HCT116 (cell line): ENCODE measurements at regions of chr9 and their contacts with region 1.

Region 1: GRCh38 chr9:129139993-129140396 is 28.8 kb downstream of the PTPA start:
- DNase-seq: peak; percentile 95
- ATAC-seq: peak; percentile 78
- H3K4me3 ChIP-seq: peak overlapping the region; percentile 60 to 69
- H3K27ac ChIP-seq: peak overlapping the region; percentile 99
- H3K4me1 ChIP-seq: peaks cover 39 to 70% of the 10 kb centered on the region in 2 experiments
- H3K27me3 ChIP-seq: no peaks in the 10 kb centered on the region
- CTCF ChIP-seq: no peak
- POLR2A ChIP-seq: no peak
- RAD21 ChIP-seq: no peak

Region 2: GRCh38 chr9:129125476-129125875 is 14.5 kb before region 1 on chr9:
- CTCF ChIA-PET with region 1: interaction called, 40 read pairs
- POLR2A ChIA-PET with region 1: no interaction called
- RAD21 ChIA-PET with region 1: no interaction called
- intact Hi-C with region 1: no loop called
- DNase-seq: peak; percentile 46
- ATAC-seq: peak; percentile 63; the same call in 1 of the 2 replicates
- H3K4me3 ChIP-seq: no peak overlapping the region
- H3K27ac ChIP-seq: no peak overlapping the region
- H3K4me1 ChIP-seq: peaks cover 3 to 17% of the 10 kb centered on the region in 2 experiments; a peak in 3 of 4 replicates
- H3K27me3 ChIP-seq: no peaks in the 10 kb centered on the region
- CTCF ChIP-seq: no peak
- POLR2A ChIP-seq: no peak
- RAD21 ChIP-seq: no peak

Region 3: DNA sequence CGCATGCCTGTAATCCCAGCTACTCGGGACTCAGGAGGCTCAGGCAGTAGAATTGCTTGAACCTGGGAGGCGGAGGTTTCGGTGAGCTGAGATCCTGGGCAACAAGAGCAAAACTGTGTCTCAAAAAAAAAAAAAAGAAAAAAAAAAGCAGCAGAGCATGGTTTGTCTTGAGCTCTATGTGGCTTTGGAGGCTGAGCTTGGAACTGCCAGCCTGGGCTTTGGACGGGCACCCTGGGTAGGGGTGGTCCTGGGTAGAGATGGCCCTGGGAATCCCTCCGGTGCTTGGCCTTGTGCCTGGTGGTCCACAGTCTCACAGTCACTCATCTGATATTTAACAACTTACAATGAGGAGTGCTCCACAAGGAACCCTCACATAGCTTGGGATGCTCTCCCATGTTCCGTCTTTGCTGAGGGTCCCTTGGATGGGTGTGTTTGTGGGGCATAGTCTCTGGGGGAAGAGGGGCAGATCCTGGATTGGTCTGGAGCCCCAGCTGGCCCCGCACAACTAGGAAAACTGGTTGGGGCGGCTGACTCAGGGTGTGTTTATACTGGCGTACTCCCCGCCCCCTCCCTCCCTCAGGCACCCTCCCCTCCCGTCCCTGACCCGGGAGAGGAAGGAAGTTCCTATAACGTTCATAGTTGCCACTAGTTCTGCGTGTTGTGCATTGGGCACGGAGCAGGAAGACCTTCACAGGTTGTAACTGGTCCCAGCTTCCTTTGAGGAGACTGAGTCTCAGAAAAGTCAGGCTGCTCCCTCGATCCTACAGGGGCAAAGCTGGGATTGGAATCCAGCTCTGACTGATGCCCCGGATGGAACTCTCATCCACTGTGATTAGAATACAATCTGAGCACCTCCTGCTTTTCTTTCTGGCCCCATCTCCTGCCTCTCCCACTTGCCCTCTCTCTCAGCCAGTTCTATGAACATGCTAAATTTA is 26.9 kb after region 1 on chr9:
- CTCF ChIA-PET with region 1: interaction called, 19 read pairs
- POLR2A ChIA-PET with region 1: interaction called, 12 read pairs
- RAD21 ChIA-PET with region 1: no interaction called
- intact Hi-C with region 1: loop called (anchors 2 kb)
- DNase-seq: peak; percentile 63
- ATAC-seq: peak; percentile 75
- H3K4me3 ChIP-seq: peak overlapping the region; percentile 56 to 57
- H3K27ac ChIP-seq: peak overlapping the region; percentile 91
- H3K4me1 ChIP-seq: peaks cover 75 to 86% of the 10 kb centered on the region in 2 experiments
- H3K27me3 ChIP-seq: no peaks in the 10 kb centered on the region
- CTCF ChIP-seq: no peak
- POLR2A ChIP-seq: no peak
- RAD21 ChIP-seq: no peak

Region 4: GRCh38 chr9:129328377-129329028 is 188.5 kb after region 1 on chr9:
- CTCF ChIA-PET with region 1: no interaction called
- POLR2A ChIA-PET with region 1: no interaction called
- RAD21 ChIA-PET with region 1: no interaction called
- intact Hi-C with region 1: no loop called
- DNase-seq: no peak
- ATAC-seq: no peak
- H3K4me3 ChIP-seq: no peak overlapping the region
- H3K27ac ChIP-seq: no peak overlapping the region
- H3K4me1 ChIP-seq: peaks cover 14 to 32% of the 10 kb centered on the region in 2 experiments
- H3K27me3 ChIP-seq: no peaks in the 10 kb centered on the region
- CTCF ChIP-seq: no peak
- POLR2A ChIP-seq: no peak
- RAD21 ChIP-seq: no peak

Region 5: GRCh38 chr9:129487642-129488409 is 347.8 kb after region 1 on chr9:
- CTCF ChIA-PET with region 1: interaction called, 3 read pairs
- POLR2A ChIA-PET with region 1: no interaction called
- RAD21 ChIA-PET with region 1: interaction called, 3 read pairs
- intact Hi-C with region 1: loop called (anchors 2 kb)
- DNase-seq: no peak
- ATAC-seq: peak; percentile 18
- H3K4me3 ChIP-seq: peak overlapping the region; percentile 2 to 58
- H3K27ac ChIP-seq: peak overlapping the region; percentile 100
- H3K4me1 ChIP-seq: peaks cover 86 to 100% of the 10 kb centered on the region in 2 experiments
- H3K27me3 ChIP-seq: no peaks in the 10 kb centered on the region
- CTCF ChIP-seq: no peak
- POLR2A ChIP-seq: peak; percentile 41
- RAD21 ChIP-seq: no peak

Region 6: GRCh38 chr9:129569502-129570449 is 429.8 kb after region 1 on chr9:
- CTCF ChIA-PET with region 1: interaction called, 4 read pairs
- POLR2A ChIA-PET with region 1: no interaction called
- RAD21 ChIA-PET with region 1: interaction called in 1 of 2 experiments, 4 read pairs
- intact Hi-C with region 1: loop called (anchors 5 kb)
- DNase-seq: peak; percentile 81
- ATAC-seq: peak; percentile 45
- H3K4me3 ChIP-seq: peak overlapping the region; percentile 34 to 72
- H3K27ac ChIP-seq: peak overlapping the region; percentile 100
- H3K4me1 ChIP-seq: peaks cover 50 to 68% of the 10 kb centered on the region in 2 experiments
- H3K27me3 ChIP-seq: no peaks in the 10 kb centered on the region
- CTCF ChIP-seq: peak in 2 of 3 experiments; percentile 66 to 80; a peak in 4 of 6 replicates
- POLR2A ChIP-seq: peak; percentile 24
- RAD21 ChIP-seq: no peak

Region 7: DNA sequence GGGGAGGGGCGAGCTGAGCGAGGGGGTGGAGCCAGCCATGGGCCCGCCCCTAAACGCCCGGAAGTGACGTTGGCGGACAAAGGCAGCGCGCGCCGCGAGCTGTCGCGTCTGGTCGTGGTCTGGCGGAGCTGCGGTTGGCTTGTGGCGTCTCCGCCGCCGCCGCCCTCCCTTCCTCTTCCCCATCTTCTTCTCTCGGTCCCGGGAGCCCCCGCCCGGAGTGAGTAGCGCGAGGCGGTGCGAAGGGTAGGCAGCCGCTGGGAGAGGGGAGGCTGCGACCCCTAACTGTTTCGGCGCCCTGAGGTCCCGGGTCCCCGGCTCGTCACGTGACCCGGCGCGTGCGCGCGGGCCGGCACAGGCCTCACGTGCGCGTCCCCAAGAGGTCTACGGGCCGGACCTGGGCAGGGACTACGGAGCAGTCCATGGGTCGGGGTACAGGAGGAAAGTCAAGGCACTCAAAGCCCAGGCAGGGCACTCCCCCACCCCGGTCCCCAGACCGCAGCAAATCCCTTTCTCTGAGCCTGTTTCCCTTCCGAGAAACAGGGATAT is 486.2 kb after region 1 on chr9 and contains the start of gene NTMT1:
- CTCF ChIA-PET with region 1: interaction called, 77 read pairs
- POLR2A ChIA-PET with region 1: interaction called, 26 read pairs
- RAD21 ChIA-PET with region 1: interaction called, 5 to 9 read pairs
- intact Hi-C with region 1: loop called (anchors 1 kb)
- DNase-seq: peak; percentile 63
- ATAC-seq: peak; percentile 84
- H3K4me3 ChIP-seq: peak within 1 kb of the TSS; percentile 88 to 99
- H3K27ac ChIP-seq: peak within 1 kb of the TSS; percentile 86
- H3K4me1 ChIP-seq: peaks cover 11 to 43% of the 10 kb centered on the region in 2 experiments
- H3K27me3 ChIP-seq: no peaks in the 10 kb centered on the region
- CTCF ChIP-seq: no peak
- POLR2A ChIP-seq: peak; percentile 67
- RAD21 ChIP-seq: no peak
- total RNA-seq, gene NTMT1: 84.8 TPM

Region 8: GRCh38 chr9:129661029-129661428 is 521.0 kb after region 1 on chr9:
- CTCF ChIA-PET with region 1: no interaction called
- POLR2A ChIA-PET with region 1: no interaction called
- RAD21 ChIA-PET with region 1: no interaction called
- intact Hi-C with region 1: no loop called
- DNase-seq: no peak
- ATAC-seq: no peak
- H3K4me3 ChIP-seq: no peak overlapping the region
- H3K27ac ChIP-seq: no peak overlapping the region
- H3K4me1 ChIP-seq: peaks cover 3 to 18% of the 10 kb centered on the region in 2 experiments; a peak in 3 of 4 replicates
- H3K27me3 ChIP-seq: no peaks in the 10 kb centered on the region
- CTCF ChIP-seq: no peak
- POLR2A ChIP-seq: no peak
- RAD21 ChIP-seq: no peak